ENCODE measurements at regions of chr10 and their contacts with region 1.

Region 1: GRCh38 chr10:105950410-105950809 is 1214.1 kb downstream of the SORCS1 start:
- DNase-seq: peak; percentile 39
- CTCF ChIP-seq: peak; percentile 72

Region 2: DNA sequence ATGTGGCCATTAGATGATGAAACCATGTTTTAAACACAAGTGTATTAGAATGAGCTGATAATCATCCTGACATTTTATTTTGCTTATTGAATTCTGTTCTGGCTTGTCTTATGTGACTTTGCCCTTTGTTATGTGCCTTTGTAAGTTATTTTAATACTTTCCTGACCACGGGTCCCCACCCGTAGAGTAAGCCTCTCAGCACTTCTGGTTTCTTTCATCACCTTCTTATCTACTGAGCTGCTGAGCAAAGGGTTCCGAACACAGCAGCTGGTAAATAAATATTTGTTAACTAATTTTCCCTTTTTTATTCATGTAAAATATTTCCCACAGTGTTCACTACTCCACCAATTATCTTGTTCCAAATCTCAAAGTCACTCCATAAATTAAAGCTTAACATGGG is 194.0 kb before region 1 on chr10:
- CTCF ChIA-PET with region 1: no interaction called
- POLR2A ChIA-PET with region 1: no interaction called
- DNase-seq: no peak
- CTCF ChIP-seq: no peak

Region 3: DNA sequence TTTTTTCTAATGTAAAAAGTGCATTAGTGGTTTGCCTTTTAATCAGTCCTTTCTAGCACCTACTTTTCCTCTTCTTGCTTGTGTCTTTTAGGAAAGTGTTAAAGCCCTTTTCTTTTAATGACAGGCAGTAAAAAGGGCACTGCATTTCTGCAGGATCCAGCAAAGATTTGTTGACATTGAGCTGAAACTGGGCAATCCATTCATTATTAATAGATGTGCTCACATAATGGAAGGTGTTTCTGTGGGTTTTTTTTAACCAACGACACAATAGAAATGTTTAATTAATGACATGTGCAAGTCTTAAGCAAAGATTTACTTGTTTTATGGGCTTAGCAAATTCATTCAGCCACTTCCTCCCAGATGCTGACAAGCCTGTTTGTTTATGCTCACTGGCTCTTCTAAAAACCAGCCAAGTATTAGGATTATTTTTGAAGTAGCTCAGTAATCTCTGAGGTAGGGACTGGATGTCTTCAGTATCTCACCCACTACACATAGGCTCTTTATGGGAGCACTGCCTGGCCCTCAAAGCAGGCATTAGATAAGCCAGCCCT is 13.0 kb after region 1 on chr10:
- CTCF ChIA-PET with region 1: interaction called, 19 read pairs
- POLR2A ChIA-PET with region 1: no interaction called
- DNase-seq: no peak
- CTCF ChIP-seq: no peak

Region 4: DNA sequence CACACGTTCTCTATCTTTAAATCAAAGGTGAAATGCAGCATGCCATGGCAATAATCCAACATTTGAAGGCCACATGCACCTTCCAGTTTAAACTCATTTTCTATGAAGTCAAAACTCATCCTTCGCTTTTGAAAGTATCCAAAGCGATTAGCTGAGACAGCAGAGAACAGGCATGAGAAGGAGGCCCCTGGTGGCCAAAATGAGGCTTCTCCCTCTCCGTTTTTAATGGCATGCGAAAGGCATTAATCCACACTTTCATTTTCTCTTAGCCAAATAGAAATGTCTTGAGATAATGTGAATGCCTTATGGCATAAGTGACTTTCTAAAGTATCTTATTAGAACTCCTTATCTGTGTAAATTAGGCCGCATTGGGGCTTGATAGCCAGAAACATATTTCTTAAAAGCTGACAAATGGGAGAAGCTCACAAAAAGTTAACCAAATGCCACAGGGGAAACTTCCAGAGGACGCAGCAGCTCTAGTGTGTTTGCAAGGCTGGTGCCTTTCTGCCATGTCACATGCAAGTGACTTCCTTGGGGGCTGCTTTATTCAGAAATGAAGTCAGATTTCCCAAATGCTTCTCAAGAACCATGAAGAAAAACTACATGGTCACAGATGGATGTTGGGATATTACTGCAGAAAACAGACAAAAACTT is 24.5 kb after region 1 on chr10:
- CTCF ChIA-PET with region 1: interaction called, 44 read pairs
- POLR2A ChIA-PET with region 1: no interaction called
- DNase-seq: no peak
- CTCF ChIP-seq: no peak

Region 5: DNA sequence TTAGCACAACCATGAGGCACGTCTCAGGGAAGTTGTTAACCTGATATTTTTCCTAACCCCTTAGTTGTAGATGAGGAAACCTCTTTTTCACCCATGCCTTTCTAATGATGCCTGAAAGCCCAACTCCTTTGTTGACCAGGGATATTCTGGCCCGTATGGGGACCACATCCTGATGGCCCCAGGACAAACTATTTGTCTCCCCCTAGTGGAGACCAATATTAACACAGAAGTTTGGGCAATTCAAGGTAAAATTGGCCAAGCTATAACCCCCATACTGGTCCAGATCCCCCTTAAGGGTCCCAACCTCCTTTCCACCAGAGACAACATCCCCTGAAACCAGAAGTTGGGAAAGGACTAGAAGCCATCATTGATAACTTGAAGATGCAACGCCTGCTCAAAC is 320.8 kb after region 1 on chr10:
- CTCF ChIA-PET with region 1: no interaction called
- POLR2A ChIA-PET with region 1: no interaction called
- DNase-seq: no peak
- CTCF ChIP-seq: peak; percentile 30

Region 6: GRCh38 chr10:106401161-106401560 is 450.8 kb after region 1 on chr10:
- CTCF ChIA-PET with region 1: no interaction called
- POLR2A ChIA-PET with region 1: no interaction called
- DNase-seq: no peak
- CTCF ChIP-seq: no peak